Breast epithelium (tissue), 4 donors: ENCODE measurements at regions of chr5 and their contacts with region 1.

Region 1: GRCh38 chr5:34550247-34550646 is 105.9 kb upstream of the RAI14 start:
- DNase-seq: no peak
- H3K4me3 ChIP-seq: no peak overlapping the region
- H3K27ac ChIP-seq: no peak overlapping the region
- H3K4me1 ChIP-seq: no peaks in the 10 kb centered on the region
- H3K27me3 ChIP-seq: no peaks in the 10 kb centered on the region
- CTCF ChIP-seq: no peak
- POLR2A ChIP-seq: no peak

Region 2: DNA sequence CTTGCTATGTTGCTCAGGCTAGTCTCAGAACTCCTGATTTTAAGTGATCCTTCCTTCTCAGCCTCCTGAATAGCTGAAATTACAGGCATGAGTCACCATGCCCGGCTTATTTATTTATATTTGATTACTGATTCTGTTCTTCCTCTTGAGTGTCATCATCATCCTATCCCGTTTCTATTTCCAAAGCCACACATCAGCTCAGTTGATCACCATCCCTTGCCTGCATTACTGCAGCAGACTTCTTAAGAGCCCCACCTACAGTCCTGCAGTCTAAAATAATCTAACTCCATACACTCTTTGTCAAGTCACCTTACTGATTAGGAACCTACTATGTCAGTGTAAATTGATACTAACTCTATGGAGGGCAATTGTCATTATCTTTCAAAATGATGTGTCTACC is 33.0 kb before region 1 on chr5:
- intact Hi-C with region 1: no loop called
- DNase-seq: no peak
- H3K4me3 ChIP-seq: no peak overlapping the region
- H3K27ac ChIP-seq: no peak overlapping the region
- H3K4me1 ChIP-seq: no peaks in the 10 kb centered on the region
- H3K27me3 ChIP-seq: no peaks in the 10 kb centered on the region
- CTCF ChIP-seq: no peak
- POLR2A ChIP-seq: no peak

Region 3: GRCh38 chr5:34533582-34534522 is 16.4 kb before region 1 on chr5:
- intact Hi-C with region 1: no loop called
- DNase-seq: no peak
- H3K4me3 ChIP-seq: no peak overlapping the region
- H3K27ac ChIP-seq: peak overlapping the region; percentile 13 to 54
- H3K4me1 ChIP-seq: no peaks in the 10 kb centered on the region
- H3K27me3 ChIP-seq: no peaks in the 10 kb centered on the region
- CTCF ChIP-seq: no peak
- POLR2A ChIP-seq: no peak

Region 4: DNA sequence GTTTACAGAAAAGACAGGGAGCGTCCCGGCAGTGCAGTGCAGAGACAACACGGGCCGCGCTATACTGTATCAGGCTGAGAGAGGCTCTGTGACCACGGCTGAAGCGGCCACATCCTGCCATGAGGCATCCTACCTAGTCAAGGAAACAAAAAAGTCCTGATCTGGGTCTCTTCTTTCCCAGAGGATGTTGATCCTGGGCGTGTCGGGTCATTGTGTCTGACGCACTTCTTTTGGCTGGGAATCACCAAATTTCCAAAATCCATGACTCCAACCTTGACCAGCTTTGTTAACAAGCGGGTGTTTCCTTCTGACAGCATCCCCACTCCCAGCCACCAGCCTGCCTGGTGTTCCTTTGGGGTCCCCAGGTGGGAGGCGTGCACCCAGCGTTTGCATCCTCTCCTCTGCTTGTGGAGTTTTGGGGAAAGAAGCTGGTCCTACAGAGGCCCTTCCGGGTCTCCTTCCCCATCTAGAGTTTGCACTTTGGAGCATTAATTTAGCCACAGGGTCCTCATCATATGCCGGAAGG is 14.5 kb after region 1 on chr5:
- intact Hi-C with region 1: loop called (anchors 1 kb)
- DNase-seq: no peak
- H3K4me3 ChIP-seq: peak overlapping the region in 1 of 3 donors; percentile 31
- H3K27ac ChIP-seq: peak overlapping the region in 1 of 2 donors; percentile 55
- H3K4me1 ChIP-seq: no peaks in the 10 kb centered on the region
- H3K27me3 ChIP-seq: no peaks in the 10 kb centered on the region
- CTCF ChIP-seq: no peak
- POLR2A ChIP-seq: no peak

Region 5: DNA sequence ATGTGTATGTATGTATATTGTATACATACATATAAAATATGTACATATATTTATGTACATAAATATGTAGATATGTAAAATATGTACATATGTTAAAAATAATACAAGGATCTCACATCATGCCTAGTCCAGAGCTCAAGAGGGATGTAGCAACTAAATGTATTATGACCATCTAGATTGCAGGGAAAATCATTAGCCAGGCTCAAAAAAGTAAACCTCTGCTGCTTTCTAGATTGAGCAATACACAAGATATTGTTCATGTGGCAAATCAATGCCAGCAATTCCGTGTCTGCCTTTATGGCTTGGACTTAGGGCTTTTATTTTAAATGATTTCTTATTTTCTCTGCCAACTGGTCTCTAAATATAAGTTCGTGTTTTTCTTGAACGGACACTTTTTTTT is 171.1 kb after region 1 on chr5:
- intact Hi-C with region 1: no loop called
- DNase-seq: no peak
- H3K4me3 ChIP-seq: no peak overlapping the region
- H3K27ac ChIP-seq: no peak overlapping the region
- H3K4me1 ChIP-seq: no peaks in the 10 kb centered on the region
- H3K27me3 ChIP-seq: no peaks in the 10 kb centered on the region
- CTCF ChIP-seq: no peak
- POLR2A ChIP-seq: no peak